B cell (primary cell): ENCODE measurements at regions of chr19 and their contacts with region 1.

Region 1: GRCh38 chr19:53195265-53195903 is 2.2 kb upstream of the ZNF665 start:
- DNase-seq: peak; percentile 85
- ATAC-seq: peak; percentile 42
- H3K4me3 ChIP-seq: no peak overlapping the region
- H3K4me3 Mint-ChIP-seq: peak overlapping the region; percentile 72
- H3K27ac ChIP-seq: no peak overlapping the region
- H3K27ac Mint-ChIP-seq: peak overlapping the region; percentile 70
- H3K4me1 ChIP-seq: peaks cover 17 to 28% of the 10 kb centered on the region in 2 donors
- H3K4me1 Mint-ChIP-seq: peaks cover 46% of the 10 kb centered on the region
- H3K27me3 ChIP-seq: no peaks in the 10 kb centered on the region
- H3K27me3 Mint-ChIP-seq: no peaks in the 10 kb centered on the region
- CTCF ChIP-seq: peak; percentile 94

Region 2: GRCh38 chr19:52897144-52897935 is 298.0 kb before region 1 on chr19 and contains the start of gene ZNF320:
- CTCF ChIA-PET with region 1: no interaction called
- POLR2A ChIA-PET with region 1: no interaction called
- intact Hi-C with region 1: loop called (anchors 5 kb)
- DNase-seq: peak; percentile 95
- ATAC-seq: peak; percentile 100
- H3K4me3 ChIP-seq: peak within 1 kb of the TSS; percentile 85 to 98 (median 98)
- H3K4me3 Mint-ChIP-seq: peak within 1 kb of the TSS; percentile 96
- H3K27ac ChIP-seq: peak within 1 kb of the TSS; percentile 66 to 83
- H3K27ac Mint-ChIP-seq: peak within 1 kb of the TSS; percentile 94
- H3K4me1 ChIP-seq: peaks cover 5 to 17% of the 10 kb centered on the region in 2 donors
- H3K4me1 Mint-ChIP-seq: peaks cover 20% of the 10 kb centered on the region
- H3K27me3 ChIP-seq: no peaks in the 10 kb centered on the region
- H3K27me3 Mint-ChIP-seq: no peaks in the 10 kb centered on the region
- CTCF ChIP-seq: no peak
- total RNA-seq, gene ZNF320: 33.1 and 36.0 TPM in 2 replicates

Region 3: GRCh38 chr19:53103198-53103944 is 92.0 kb before region 1 on chr19 and contains the start of gene ZNF160:
- CTCF ChIA-PET with region 1: no interaction called
- POLR2A ChIA-PET with region 1: interaction called, 5 read pairs
- intact Hi-C with region 1: loop called (anchors 1 kb)
- DNase-seq: peak; percentile 98
- ATAC-seq: peak; percentile 97
- H3K4me3 ChIP-seq: peak within 1 kb of the TSS; percentile 69 to 98 (median 93)
- H3K4me3 Mint-ChIP-seq: peak within 1 kb of the TSS; percentile 97
- H3K27ac ChIP-seq: peak within 1 kb of the TSS; percentile 83 to 93
- H3K27ac Mint-ChIP-seq: peak within 1 kb of the TSS; percentile 96
- H3K4me1 ChIP-seq: peaks cover 14 to 18% of the 10 kb centered on the region in 2 donors
- H3K4me1 Mint-ChIP-seq: peaks cover 34% of the 10 kb centered on the region
- H3K27me3 ChIP-seq: no peaks in the 10 kb centered on the region
- H3K27me3 Mint-ChIP-seq: no peaks in the 10 kb centered on the region
- CTCF ChIP-seq: no peak
- total RNA-seq, gene ZNF160: 87.8 and 97.5 TPM in 2 replicates

Region 4: GRCh38 chr19:53365134-53365898 is 169.9 kb after region 1 on chr19 and contains the start of gene ZNF525:
- CTCF ChIA-PET with region 1: interaction called, 12 read pairs
- POLR2A ChIA-PET with region 1: no interaction called
- intact Hi-C with region 1: loop called (anchors 1 kb)
- DNase-seq: peak; percentile 97
- ATAC-seq: peak; percentile 100
- H3K4me3 ChIP-seq: peak within 1 kb of the TSS; percentile 79 to 99 (median 90)
- H3K4me3 Mint-ChIP-seq: peak within 1 kb of the TSS; percentile 93
- H3K27ac ChIP-seq: peak within 1 kb of the TSS; percentile 66 to 91
- H3K27ac Mint-ChIP-seq: peak within 1 kb of the TSS; percentile 94
- H3K4me1 ChIP-seq: peaks cover 9 to 11% of the 10 kb centered on the region in 2 donors
- H3K4me1 Mint-ChIP-seq: peaks cover 25% of the 10 kb centered on the region
- H3K27me3 ChIP-seq: no peaks in the 10 kb centered on the region
- H3K27me3 Mint-ChIP-seq: no peaks in the 10 kb centered on the region
- CTCF ChIP-seq: peak; percentile 63
- total RNA-seq, gene ZNF525: 33.8 and 34.3 TPM in 2 replicates

Region 5: GRCh38 chr19:53511933-53512374 is 316.6 kb after region 1 on chr19:
- CTCF ChIA-PET with region 1: interaction called, 13 read pairs
- POLR2A ChIA-PET with region 1: no interaction called
- intact Hi-C with region 1: no loop called
- DNase-seq: peak; percentile 68
- ATAC-seq: peak; percentile 76
- H3K4me3 ChIP-seq: no peak overlapping the region
- H3K4me3 Mint-ChIP-seq: no peak overlapping the region
- H3K27ac ChIP-seq: no peak overlapping the region
- H3K27ac Mint-ChIP-seq: no peak overlapping the region
- H3K4me1 ChIP-seq: no peaks in the 10 kb centered on the region
- H3K4me1 Mint-ChIP-seq: peaks cover 3% of the 10 kb centered on the region
- H3K27me3 ChIP-seq: peaks cover 0 to 4% (median 0%) of the 10 kb centered on the region in 4 experiments
- H3K27me3 Mint-ChIP-seq: peaks cover 11% of the 10 kb centered on the region
- CTCF ChIP-seq: peak; percentile 74

Region 6: DNA sequence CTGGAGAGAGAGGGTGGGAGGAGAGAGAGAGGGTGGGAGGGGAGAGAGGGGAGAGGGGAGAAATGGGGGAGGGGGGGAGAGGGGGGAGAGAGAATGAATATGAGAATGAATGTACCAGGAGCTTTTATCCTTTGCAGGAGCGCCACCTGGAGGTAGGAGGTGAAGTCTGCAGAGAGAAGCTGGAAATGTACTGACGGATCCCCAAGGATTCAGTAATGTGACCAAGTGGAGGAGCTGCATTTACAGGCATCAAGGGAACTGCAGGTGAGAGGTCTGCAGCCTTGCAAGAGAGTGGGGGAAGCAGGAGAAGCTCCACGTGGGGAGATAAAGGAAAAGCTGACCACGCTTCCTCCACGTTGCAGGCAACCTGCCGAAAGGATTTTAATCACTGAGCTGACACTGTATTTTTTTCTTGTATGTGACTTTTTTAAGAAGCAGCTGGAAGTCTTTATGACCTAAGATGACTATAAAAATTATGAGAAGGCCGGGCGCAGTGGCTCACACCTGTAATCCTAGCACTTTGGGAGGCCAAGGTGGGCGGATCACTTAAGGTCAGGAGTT is 834.6 kb after region 1 on chr19:
- CTCF ChIA-PET with region 1: interaction called, 6 read pairs
- POLR2A ChIA-PET with region 1: no interaction called
- intact Hi-C with region 1: loop called (anchors 10 kb)
- DNase-seq: peak; percentile 56
- ATAC-seq: no peak
- H3K4me3 ChIP-seq: no peak overlapping the region
- H3K4me3 Mint-ChIP-seq: no peak overlapping the region
- H3K27ac ChIP-seq: no peak overlapping the region
- H3K27ac Mint-ChIP-seq: no peak overlapping the region
- H3K4me1 ChIP-seq: no peaks in the 10 kb centered on the region
- H3K4me1 Mint-ChIP-seq: no peaks in the 10 kb centered on the region
- H3K27me3 ChIP-seq: peaks cover 0 to 6% (median 0%) of the 10 kb centered on the region in 4 experiments
- H3K27me3 Mint-ChIP-seq: peaks cover 27% of the 10 kb centered on the region
- CTCF ChIP-seq: peak; percentile 59